CD4-positive, alpha-beta memory T cell (primary cell): ENCODE measurements at regions of chr7 and their contacts with region 1.

Region 1: DNA sequence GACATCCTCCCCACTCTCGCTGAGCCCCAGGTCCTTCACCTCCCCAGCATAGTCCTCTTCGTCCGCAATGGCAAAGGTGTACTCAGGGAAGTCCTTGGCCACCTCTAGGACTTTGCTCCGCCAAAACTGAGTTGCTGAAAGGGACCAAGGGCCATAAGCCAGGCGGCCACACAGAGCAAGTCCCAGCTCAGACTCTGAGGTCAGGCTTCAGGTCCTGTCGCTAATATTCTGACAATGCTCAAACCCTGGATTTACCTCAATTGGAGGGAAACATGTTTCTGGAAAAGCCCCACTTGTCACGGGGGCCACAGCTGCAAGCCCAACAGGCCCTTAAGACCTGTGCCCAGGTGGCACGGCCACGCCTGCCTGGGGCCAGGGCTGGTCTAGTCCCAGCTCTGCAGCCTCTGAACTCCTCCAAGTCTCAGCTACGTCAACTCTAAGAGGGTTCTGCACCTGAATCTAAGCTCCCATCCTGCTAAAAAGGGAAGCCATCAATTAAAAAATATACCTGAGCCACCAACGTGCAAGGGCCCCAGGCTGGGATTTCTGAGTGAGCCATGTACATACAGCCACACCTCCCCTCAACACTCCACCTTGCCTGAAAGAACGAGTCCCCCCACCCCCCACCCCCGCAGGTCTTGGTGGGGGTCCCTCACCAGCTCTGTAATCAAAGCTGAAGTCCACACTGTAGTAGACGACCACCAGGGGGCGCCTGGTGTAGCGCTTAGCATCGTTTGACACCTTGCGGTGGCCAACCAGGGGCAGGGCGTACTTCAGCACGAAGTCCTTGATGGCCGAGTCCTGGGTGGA is 22.9 kb downstream of the PDIA4 start:
- DNase-seq: peak; percentile 71 to 79 (median 73)
- H3K4me3 ChIP-seq: no peak overlapping the region
- H3K4me3 Mint-ChIP-seq: no peak overlapping the region
- H3K27ac ChIP-seq: no peak overlapping the region
- H3K27ac Mint-ChIP-seq: peak overlapping the region in 5 of 7 donors; percentile 46 to 87 (median 62)
- H3K4me1 ChIP-seq: peaks cover 4% of the 10 kb centered on the region
- H3K4me1 Mint-ChIP-seq: peaks cover 3 to 4% (median 4%) of the 10 kb centered on the region in 4 donors
- H3K27me3 ChIP-seq: no peaks in the 10 kb centered on the region
- H3K27me3 Mint-ChIP-seq: no peaks in the 10 kb centered on the region

Region 2: DNA sequence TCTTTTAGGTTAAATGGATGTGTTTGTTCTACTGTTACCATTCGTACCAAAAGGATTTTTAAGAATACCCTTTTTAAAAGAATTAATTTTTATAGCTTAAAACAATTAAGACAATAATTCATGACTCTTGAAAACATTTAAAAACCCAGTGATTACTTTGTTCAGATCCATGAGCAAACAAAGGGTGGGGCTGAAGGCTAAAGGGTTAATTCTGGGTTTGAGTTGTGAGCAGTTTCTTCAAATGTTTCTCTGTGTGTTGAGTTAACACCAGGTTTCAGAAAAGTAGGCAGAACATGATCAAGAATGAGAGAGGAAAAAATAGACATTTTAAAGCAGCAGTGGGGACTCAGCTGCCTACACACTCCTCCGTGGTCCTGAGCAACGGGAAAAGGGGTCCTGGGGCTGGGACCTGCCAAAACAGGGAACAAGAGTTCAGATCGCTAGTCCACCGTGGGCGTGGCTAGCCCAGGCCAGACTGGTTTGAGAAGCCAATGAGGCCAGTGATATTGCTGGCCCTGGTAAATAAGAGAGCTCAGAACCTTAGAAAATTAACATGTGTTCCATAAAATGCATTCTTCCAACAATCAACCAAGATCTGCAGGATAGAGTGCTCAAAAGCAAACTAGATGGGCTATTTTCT is 106.5 kb before region 1 on chr7:
- CTCF ChIA-PET with region 1: no interaction called
- POLR2A ChIA-PET with region 1: no interaction called
- intact Hi-C with region 1: no loop called
- DNase-seq: no peak
- H3K4me3 ChIP-seq: no peak overlapping the region
- H3K4me3 Mint-ChIP-seq: no peak overlapping the region
- H3K27ac ChIP-seq: no peak overlapping the region
- H3K27ac Mint-ChIP-seq: peak overlapping the region in 1 of 7 donors; percentile 15
- H3K4me1 ChIP-seq: no peaks in the 10 kb centered on the region
- H3K4me1 Mint-ChIP-seq: no peaks in the 10 kb centered on the region
- H3K27me3 ChIP-seq: no peaks in the 10 kb centered on the region
- H3K27me3 Mint-ChIP-seq: peaks cover 0 to 2% of the 10 kb centered on the region in 2 donors

Region 3: GRCh38 chr7:148987010-148987750 is 18.3 kb before region 1 on chr7:
- CTCF ChIA-PET with region 1: interaction called, 26 read pairs
- POLR2A ChIA-PET with region 1: interaction called, 4 read pairs
- intact Hi-C with region 1: loop called (anchors 1 kb)
- DNase-seq: peak; percentile 89 to 91 (median 90)
- H3K4me3 ChIP-seq: peak overlapping the region; percentile 95 to 98
- H3K4me3 Mint-ChIP-seq: peak overlapping the region; percentile 93 to 99 (median 98)
- H3K27ac ChIP-seq: peak overlapping the region; percentile 83
- H3K27ac Mint-ChIP-seq: peak overlapping the region; percentile 96 to 100 (median 98)
- H3K4me1 ChIP-seq: peaks cover 46% of the 10 kb centered on the region
- H3K4me1 Mint-ChIP-seq: peaks cover 27 to 59% (median 45%) of the 10 kb centered on the region in 4 donors
- H3K27me3 ChIP-seq: no peaks in the 10 kb centered on the region
- H3K27me3 Mint-ChIP-seq: peaks cover 2 to 5% of the 10 kb centered on the region in 2 donors

Region 4: DNA sequence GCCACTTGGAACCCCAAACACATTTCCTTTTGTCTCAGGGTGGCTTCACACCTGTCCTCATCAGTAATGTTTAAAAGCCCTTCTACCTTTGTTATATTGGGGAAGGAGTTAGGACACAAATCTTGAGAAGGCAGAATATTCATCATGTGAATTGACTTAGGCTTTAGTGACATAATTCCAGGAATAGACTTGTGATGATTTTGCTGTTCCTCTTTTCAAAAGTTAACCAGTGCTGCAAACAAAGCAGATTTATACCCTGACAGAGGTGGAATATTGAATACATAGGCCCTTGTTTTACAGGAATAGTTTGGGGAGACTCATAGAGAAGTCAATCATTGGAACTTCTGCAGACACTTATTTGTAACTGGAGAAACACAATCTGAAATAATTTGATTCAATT is 58.0 kb after region 1 on chr7:
- CTCF ChIA-PET with region 1: interaction called, 145 read pairs
- POLR2A ChIA-PET with region 1: interaction called, 26 read pairs
- intact Hi-C with region 1: loop called (anchors 1 kb)
- DNase-seq: no peak
- H3K4me3 ChIP-seq: no peak overlapping the region
- H3K4me3 Mint-ChIP-seq: peak overlapping the region in 3 of 8 donors; percentile 17 to 50 (median 44)
- H3K27ac ChIP-seq: no peak overlapping the region
- H3K27ac Mint-ChIP-seq: peak overlapping the region in 1 of 7 donors; percentile 89
- H3K4me1 ChIP-seq: no peaks in the 10 kb centered on the region
- H3K4me1 Mint-ChIP-seq: peaks cover 4 to 11% (median 9%) of the 10 kb centered on the region in 4 donors
- H3K27me3 ChIP-seq: no peaks in the 10 kb centered on the region
- H3K27me3 Mint-ChIP-seq: no peaks in the 10 kb centered on the region